CD8-positive, alpha-beta memory T cell (primary cell): ENCODE measurements at regions of chr10 and their contacts with region 1.

Region 1: DNA sequence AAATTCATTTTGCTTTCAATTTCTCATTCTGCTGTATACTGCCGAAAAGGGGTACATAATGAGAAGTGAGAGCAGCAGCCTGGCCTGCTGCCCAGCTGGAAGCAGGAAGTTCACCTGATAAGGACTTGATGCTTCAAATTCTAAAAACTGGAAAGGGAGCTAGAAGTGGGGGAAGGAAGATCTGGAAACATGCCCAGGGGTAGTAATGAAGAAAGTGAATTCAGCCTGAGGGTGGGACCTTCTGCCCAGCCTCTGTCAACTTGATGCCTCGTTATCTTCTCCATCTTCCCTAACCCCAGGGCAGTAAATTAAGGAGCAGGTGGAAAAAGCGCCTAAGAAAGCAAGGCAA is 69.4 kb downstream of the ARMH3 start:
- DNase-seq: no peak
- H3K4me3 ChIP-seq: no peak overlapping the region
- H3K4me3 Mint-ChIP-seq: no peak overlapping the region
- H3K27ac ChIP-seq: no peak overlapping the region
- H3K27ac Mint-ChIP-seq: peak overlapping the region in 2 of 8 donors; percentile 39 to 92
- H3K4me1 ChIP-seq: no peaks in the 10 kb centered on the region
- H3K4me1 Mint-ChIP-seq: no peaks in the 10 kb centered on the region
- H3K27me3 ChIP-seq: no peaks in the 10 kb centered on the region
- H3K27me3 Mint-ChIP-seq: peaks cover 0 to 2% of the 10 kb centered on the region in 2 donors

Region 2: GRCh38 chr10:101807158-101807557 is 179.4 kb before region 1 on chr10:
- CTCF ChIA-PET with region 1: no interaction called
- POLR2A ChIA-PET with region 1: no interaction called
- DNase-seq: no peak
- H3K4me3 ChIP-seq: no peak overlapping the region
- H3K4me3 Mint-ChIP-seq: no peak overlapping the region
- H3K27ac ChIP-seq: no peak overlapping the region
- H3K27ac Mint-ChIP-seq: peak overlapping the region in 5 of 8 donors; percentile 26 to 88 (median 42)
- H3K4me1 ChIP-seq: peaks cover 11% of the 10 kb centered on the region
- H3K4me1 Mint-ChIP-seq: peaks cover 32 to 46% (median 42%) of the 10 kb centered on the region in 3 donors
- H3K27me3 ChIP-seq: no peaks in the 10 kb centered on the region
- H3K27me3 Mint-ChIP-seq: no peaks in the 10 kb centered on the region

Region 3: GRCh38 chr10:102045292-102045691 is 58.7 kb after region 1 on chr10:
- CTCF ChIA-PET with region 1: no interaction called
- POLR2A ChIA-PET with region 1: interaction called, 10 read pairs
- DNase-seq: no peak
- H3K4me3 ChIP-seq: no peak overlapping the region
- H3K4me3 Mint-ChIP-seq: no peak overlapping the region
- H3K27ac ChIP-seq: no peak overlapping the region
- H3K27ac Mint-ChIP-seq: no peak overlapping the region
- H3K4me1 ChIP-seq: no peaks in the 10 kb centered on the region
- H3K4me1 Mint-ChIP-seq: peaks cover 43 to 75% (median 54%) of the 10 kb centered on the region in 3 donors
- H3K27me3 ChIP-seq: no peaks in the 10 kb centered on the region
- H3K27me3 Mint-ChIP-seq: no peaks in the 10 kb centered on the region